ENCODE measurements at regions of chr5 and their contacts with region 1.

Region 1: DNA sequence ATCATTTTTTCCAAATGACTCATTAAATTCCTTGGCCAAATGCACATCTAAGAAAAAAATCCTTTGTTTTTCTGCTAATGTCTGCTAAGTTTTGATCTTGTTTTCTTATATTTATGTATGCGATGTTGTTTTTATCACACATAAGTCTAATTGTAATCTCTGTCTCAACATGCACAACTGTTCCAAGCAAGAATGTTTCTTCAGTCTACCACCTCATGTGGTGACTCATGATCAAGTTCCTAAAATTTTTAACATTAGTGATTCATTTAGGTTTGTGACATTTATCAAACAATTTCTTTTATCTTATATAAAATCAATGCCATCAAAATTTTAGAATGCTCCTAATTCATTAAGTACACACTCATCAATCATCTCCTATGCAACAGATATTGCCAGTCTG is 763.9 kb upstream of the FAM174A start:
- DNase-seq: peak; percentile 63
- H3K4me3 ChIP-seq: no peak overlapping the region
- H3K27ac ChIP-seq: peak overlapping the region; percentile 19
- H3K4me1 ChIP-seq: peaks cover 21% of the 10 kb centered on the region
- H3K27me3 ChIP-seq: no peaks in the 10 kb centered on the region
- CTCF ChIP-seq: no peak
- POLR2A ChIP-seq: no peak

Region 2: DNA sequence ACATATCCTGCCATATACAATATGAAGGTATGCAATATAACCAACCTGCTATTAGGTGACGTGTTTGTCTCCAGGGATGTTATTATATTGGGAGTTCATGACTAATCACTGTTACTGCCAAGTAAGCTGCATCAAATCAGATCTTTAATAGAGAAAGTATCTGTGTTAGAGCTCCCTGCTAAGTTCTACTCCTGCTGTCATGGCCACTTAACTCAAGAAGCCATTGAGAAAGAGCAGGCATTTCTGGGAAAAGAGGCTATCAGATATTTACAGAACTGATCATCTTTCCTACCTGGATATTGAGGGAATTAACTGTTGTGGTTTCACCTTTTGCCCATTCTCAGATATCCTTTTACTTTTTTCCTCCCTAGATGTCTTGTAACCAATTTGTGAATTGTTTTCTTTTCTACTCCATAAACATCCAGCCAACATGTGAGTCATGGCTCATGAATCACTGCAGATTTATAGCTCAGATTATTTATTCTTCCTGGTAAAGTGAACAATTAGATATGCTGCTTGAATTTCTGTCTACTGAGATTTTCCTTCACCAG is 129.1 kb after region 1 on chr5:
- CTCF ChIA-PET with region 1: no interaction called
- POLR2A ChIA-PET with region 1: no interaction called
- dilution Hi-C with region 1: no loop called
- intact Hi-C with region 1: loop called (anchors 2 kb)
- DNase-seq: peak; percentile 95
- H3K4me3 ChIP-seq: peak overlapping the region in 1 of 3 experiments; percentile 35
- H3K27ac ChIP-seq: peak overlapping the region; percentile 88
- H3K4me1 ChIP-seq: peaks cover 18% of the 10 kb centered on the region
- H3K27me3 ChIP-seq: no peaks in the 10 kb centered on the region
- CTCF ChIP-seq: no peak
- POLR2A ChIP-seq: no peak

Measured in endothelial cell of umbilical vein (primary cell).